Right cardiac atrium (tissue), 5 donors: ENCODE measurements at regions of chr16 and their contacts with region 1.

Region 1: DNA sequence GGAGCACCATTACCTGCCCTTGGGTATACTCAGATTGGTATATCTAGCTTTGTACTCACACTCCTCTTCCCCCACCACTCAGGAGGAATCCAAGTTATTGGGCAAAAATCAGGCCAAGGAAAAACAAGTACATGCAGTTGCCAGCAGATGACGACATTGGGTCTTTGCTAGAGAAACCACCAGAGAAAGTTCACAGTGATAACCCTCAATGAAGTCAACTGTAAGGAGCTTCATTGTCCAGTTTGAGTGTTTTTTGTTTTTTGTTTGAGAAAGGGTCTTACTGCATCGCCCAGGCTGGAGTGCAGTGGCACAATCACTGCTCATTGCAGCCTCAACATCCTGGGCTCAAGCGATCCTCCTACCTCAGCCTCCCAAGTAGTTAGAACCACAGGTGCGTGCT is 34.6 kb upstream of the TOX3 start:
- DNase-seq: no peak
- ATAC-seq: no peak
- H3K4me3 ChIP-seq: no peak overlapping the region
- H3K27ac ChIP-seq: no peak overlapping the region
- H3K4me1 ChIP-seq: no peaks in the 10 kb centered on the region
- H3K27me3 ChIP-seq: no peaks in the 10 kb centered on the region

Region 2: DNA sequence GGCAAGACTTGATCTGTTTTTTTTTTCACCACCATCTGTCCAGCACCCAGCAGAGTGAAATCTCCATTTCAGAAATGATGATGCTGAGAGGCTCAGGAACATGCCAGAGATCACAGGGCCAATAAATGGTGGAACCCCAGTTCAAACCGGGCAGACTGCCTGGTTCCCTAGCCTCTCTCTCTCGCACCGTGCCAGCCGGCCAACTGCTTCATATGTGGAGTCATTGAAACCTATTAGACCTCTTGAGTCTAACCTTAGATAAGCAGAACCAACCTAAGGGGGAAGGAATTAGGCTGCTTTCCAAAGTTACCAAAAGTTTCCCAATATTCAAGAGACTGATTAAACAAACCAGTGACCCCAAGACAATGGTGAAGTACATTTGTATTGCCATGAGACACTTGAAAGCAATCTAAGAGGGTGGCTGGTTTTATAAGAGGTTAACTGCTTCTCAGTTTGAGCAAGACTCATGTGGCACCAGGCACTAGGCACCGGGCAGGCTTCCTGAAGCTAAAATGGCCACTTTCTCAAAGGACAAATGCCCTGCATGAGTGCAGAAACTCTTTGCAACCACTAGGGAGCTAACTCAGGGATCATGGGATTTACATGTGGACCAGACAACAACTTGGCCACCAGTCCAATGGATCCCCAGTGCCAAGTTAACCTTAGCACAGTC is 53.0 kb before region 1 on chr16:
- intact Hi-C with region 1: loop called in 1 of 4 experiments (anchors 10 kb)
- DNase-seq: no peak
- ATAC-seq: no peak
- H3K4me3 ChIP-seq: no peak overlapping the region
- H3K27ac ChIP-seq: no peak overlapping the region
- H3K4me1 ChIP-seq: no peaks in the 10 kb centered on the region
- H3K27me3 ChIP-seq: no peaks in the 10 kb centered on the region

Region 3: GRCh38 chr16:52649870-52650269 is 68.3 kb after region 1 on chr16:
- intact Hi-C with region 1: loop called in 1 of 4 experiments (anchors 10 kb)
- DNase-seq: no peak
- ATAC-seq: no peak
- H3K4me3 ChIP-seq: no peak overlapping the region
- H3K27ac ChIP-seq: no peak overlapping the region
- H3K4me1 ChIP-seq: no peaks in the 10 kb centered on the region
- H3K27me3 ChIP-seq: no peaks in the 10 kb centered on the region

Region 4: GRCh38 chr16:52671590-52671989 is 90.1 kb after region 1 on chr16:
- intact Hi-C with region 1: no loop called
- DNase-seq: no peak
- ATAC-seq: no peak
- H3K4me3 ChIP-seq: no peak overlapping the region
- H3K27ac ChIP-seq: no peak overlapping the region
- H3K4me1 ChIP-seq: no peaks in the 10 kb centered on the region
- H3K27me3 ChIP-seq: no peaks in the 10 kb centered on the region